Activated T-helper 2 cell treated with anti-CD3 and anti-CD28 coated beads, Interferon-gamma antibody, Interleukin-2, Interleukin-4, amounts not matched to agents 10 μg/mL and 5 μg/mL and 100 μg/mL, durations not matched to agents 14 hours and 24 hours and 36 hours (primary cell): ENCODE measurements at regions of chr6 and their contacts with region 1.

Region 1: DNA sequence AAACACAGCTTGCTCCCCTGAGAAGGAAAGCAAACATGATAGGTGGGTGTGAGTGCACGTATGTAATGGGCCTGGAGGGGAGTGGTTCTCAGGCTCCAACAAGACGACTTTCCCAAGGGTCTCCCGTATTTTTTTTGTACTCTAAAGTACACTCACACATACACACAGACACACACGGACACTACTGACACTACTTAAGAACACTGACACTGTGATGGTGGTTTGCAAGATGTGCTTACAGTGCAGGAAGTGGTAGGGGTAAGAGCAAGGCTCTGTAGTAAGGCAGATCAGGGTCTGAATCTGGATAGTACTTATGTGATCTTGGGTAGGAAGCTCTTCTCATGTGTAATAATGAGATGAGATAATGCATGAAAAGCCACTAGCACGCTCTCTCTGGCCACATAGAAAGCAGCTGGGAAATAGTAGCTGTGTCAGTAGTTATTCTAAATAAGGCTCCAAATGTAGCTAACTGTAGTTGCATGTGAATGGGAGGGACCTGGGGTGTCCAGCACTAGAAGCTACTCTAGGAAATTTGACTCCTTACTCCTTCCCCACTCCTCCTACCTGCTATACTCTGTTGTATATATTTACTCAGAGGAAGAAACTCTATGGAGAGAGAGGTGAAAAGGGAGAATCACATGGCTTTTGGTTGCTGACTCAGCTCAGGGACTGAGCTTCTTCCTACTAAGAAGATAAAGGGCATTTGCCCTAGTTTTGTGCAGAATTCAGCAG is 8.4 kb upstream of the ZBTB24 start:
- DNase-seq: peak; percentile 57
- H3K4me3 Mint-ChIP-seq: peak overlapping the region; percentile 58
- H3K27ac Mint-ChIP-seq: peak overlapping the region; percentile 94
- H3K4me1 Mint-ChIP-seq: peaks cover 51% of the 10 kb centered on the region
- H3K27me3 Mint-ChIP-seq: no peaks in the 10 kb centered on the region

Region 2: GRCh38 chr6:108782179-108783041 is 709.0 kb before region 1 on chr6:
- intact Hi-C with region 1: no loop called
- DNase-seq: peak; percentile 65
- H3K4me3 Mint-ChIP-seq: peak overlapping the region; percentile 55
- H3K27ac Mint-ChIP-seq: no peak overlapping the region
- H3K4me1 Mint-ChIP-seq: peaks cover 11% of the 10 kb centered on the region
- H3K27me3 Mint-ChIP-seq: peaks cover 66% of the 10 kb centered on the region

Region 3: DNA sequence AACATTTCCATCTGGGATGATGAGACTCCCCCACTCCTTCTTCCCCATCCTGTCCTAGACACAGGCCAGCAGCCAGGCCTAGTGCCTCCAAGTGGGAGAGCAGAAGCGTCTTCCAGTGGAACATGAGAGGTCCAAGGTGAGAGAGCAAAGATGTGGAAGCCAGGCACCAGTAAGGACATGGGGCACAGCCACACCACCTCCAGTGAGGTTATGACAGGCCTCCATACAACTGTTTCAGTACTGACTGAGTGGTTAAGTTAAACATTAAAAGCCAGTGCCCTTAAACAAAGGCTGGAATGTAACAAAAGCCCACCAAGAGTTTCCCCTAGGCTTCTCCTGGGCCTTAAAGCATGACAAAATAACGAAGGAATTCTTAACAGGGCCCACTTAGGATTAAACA is 13.6 kb before region 1 on chr6:
- intact Hi-C with region 1: loop called (anchors 2 kb)
- DNase-seq: no peak
- H3K4me3 Mint-ChIP-seq: peak overlapping the region; percentile 78
- H3K27ac Mint-ChIP-seq: peak overlapping the region; percentile 90
- H3K4me1 Mint-ChIP-seq: peaks cover 68% of the 10 kb centered on the region
- H3K27me3 Mint-ChIP-seq: no peaks in the 10 kb centered on the region

Region 4: DNA sequence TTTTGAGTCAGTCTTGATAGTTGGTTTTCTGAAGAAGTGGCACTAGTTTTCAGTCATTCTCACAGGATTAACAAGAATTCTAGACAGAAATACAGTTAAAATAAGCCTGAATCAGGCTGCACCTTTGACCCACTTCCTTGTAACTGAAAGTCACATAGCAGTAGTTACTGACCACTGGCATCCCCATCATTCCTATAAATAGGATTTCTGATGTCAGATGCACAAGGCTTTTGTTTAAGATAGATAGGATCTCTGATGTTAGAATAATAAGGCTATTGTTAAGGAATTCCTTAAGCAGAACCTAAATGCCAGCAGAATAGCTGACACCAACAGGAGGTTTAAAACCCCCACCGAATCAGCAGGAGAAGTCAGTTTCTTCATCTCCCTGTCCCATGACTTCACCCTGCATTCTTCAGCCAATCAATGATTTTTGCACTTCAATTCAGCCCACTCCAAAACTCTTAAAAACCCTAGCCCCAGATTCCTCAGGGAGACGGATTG is 22.2 kb after region 1 on chr6:
- intact Hi-C with region 1: loop called (anchors 1 kb)
- DNase-seq: no peak
- H3K4me3 Mint-ChIP-seq: no peak overlapping the region
- H3K27ac Mint-ChIP-seq: peak overlapping the region; percentile 71
- H3K4me1 Mint-ChIP-seq: peaks cover 41% of the 10 kb centered on the region
- H3K27me3 Mint-ChIP-seq: no peaks in the 10 kb centered on the region

Region 5: DNA sequence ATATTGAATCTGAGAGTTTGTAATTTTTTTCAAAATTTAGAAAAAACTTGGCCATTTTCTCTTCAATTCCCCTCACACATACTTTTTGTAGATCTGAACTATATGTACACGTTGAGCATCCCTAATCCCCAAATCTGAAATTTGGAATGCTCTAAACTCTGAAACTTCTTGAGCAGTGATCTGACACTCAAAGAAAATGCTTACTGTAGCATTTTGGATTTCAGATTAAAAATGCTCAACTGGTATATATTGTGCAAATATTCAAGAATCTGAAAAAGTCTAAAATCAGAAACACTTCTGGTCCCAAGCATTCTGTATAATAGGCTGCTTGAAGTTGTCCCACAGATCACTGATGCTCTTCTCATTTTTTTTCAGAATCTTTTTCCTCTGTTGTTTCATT is 70.5 kb after region 1 on chr6:
- intact Hi-C with region 1: no loop called
- DNase-seq: no peak
- H3K4me3 Mint-ChIP-seq: no peak overlapping the region
- H3K27ac Mint-ChIP-seq: no peak overlapping the region
- H3K4me1 Mint-ChIP-seq: no peaks in the 10 kb centered on the region
- H3K27me3 Mint-ChIP-seq: no peaks in the 10 kb centered on the region